ENCODE measurements at regions of chr2 and their contacts with region 1.

Region 1: GRCh38 chr2:73828818-73829570 is at the start of gene STAMBP:
- ATAC-seq: peak; percentile 91 to 99 (median 98)
- H3K4me3 ChIP-seq: peak within 1 kb of the TSS; percentile 66 to 94 (median 83)
- H3K27ac ChIP-seq: peak within 1 kb of the TSS; percentile 86 to 87
- H3K4me1 ChIP-seq: peaks cover 5 to 8% of the 10 kb centered on the region in 2 donors
- total RNA-seq, gene STAMBP: 28.3 to 65.1 (median 37.3) TPM

Region 2: GRCh38 chr2:73970850-73971471 is 142.0 kb after region 1 on chr2:
- in situ Hi-C with region 1: loop called in 1 of 9 experiments (anchors 25 kb)
- ATAC-seq: no peak
- H3K4me3 ChIP-seq: no peak overlapping the region
- H3K27ac ChIP-seq: no peak overlapping the region
- H3K4me1 ChIP-seq: peaks cover 0 to 7% of the 10 kb centered on the region in 2 donors

Region 3: DNA sequence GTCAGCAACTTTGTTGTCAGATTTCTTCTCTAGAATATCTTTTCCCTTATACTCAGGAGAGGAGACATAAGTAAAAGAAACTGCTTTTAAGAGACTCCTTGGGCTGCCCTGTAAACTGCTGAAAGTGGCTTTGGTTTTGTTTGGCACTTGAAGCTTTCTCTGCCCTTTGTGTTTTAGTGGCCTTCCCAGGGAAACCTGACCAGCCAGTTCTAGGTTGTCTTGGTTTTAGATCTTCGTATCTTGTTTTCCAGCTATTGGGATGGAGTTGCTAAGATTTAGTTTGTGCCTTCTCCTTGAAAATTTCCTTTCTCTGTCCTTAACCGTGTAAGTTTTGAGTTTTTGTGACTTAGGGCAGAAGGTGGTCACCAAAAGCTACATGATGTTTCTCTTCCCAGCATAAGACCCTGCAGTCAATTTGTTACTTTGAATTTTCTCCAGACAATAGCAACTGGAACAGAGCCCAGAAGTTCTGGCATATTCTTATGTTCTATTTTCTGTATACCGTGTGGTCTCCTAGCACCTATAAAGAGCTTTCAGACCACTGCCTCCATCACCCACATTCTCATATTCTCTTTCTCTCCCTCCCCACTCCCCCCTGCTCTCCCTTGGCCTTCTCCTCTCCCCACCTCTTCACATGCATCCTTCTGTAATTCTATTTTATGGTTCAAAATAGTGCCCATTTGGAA is 237.7 kb after region 1 on chr2:
- in situ Hi-C with region 1: no loop called
- ATAC-seq: peak in 1 of 8 experiments; percentile 67
- H3K4me3 ChIP-seq: no peak overlapping the region
- H3K27ac ChIP-seq: no peak overlapping the region
- H3K4me1 ChIP-seq: no peaks in the 10 kb centered on the region

Region 4: DNA sequence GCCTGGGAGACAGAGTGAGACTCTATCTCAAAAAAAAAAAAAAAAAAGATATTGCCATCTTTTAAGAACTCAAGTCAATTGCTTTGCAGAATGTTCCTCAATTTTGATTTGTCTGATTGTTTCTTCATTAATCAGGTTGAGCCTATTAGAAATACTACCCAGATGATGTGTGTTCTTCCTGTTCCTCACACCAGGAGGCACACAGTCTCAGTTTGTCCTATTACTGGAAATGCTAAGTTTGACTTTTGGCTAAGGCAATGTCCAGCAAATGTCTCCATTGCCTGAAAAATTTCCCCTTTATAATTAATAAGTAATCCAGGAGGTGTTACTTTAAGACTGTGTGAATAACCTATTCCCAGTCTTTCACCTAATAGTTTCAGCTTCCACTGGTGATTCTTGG is 290.3 kb after region 1 on chr2:
- in situ Hi-C with region 1: no loop called
- ATAC-seq: no peak
- H3K4me3 ChIP-seq: no peak overlapping the region
- H3K27ac ChIP-seq: no peak overlapping the region
- H3K4me1 ChIP-seq: no peaks in the 10 kb centered on the region

Region 5: GRCh38 chr2:74147727-74148456 is 318.9 kb after region 1 on chr2 and contains the start of gene BOLA3:
- in situ Hi-C with region 1: loop called in 6 of 9 experiments (anchors 25 kb)
- ATAC-seq: peak; percentile 90 to 98 (median 96)
- H3K4me3 ChIP-seq: peak within 1 kb of the TSS; percentile 64 to 97 (median 92)
- H3K27ac ChIP-seq: peak within 1 kb of the TSS; percentile 31 to 56
- H3K4me1 ChIP-seq: peaks cover 13 to 14% of the 10 kb centered on the region in 2 donors
- total RNA-seq, gene BOLA3: 31.2 to 77.9 (median 45.8) TPM

Region 6: GRCh38 chr2:74168739-74169138 is 339.7 kb after region 1 on chr2:
- in situ Hi-C with region 1: loop called in 5 of 9 experiments (anchors 25 kb)
- ATAC-seq: no peak
- H3K4me3 ChIP-seq: no peak overlapping the region
- H3K27ac ChIP-seq: no peak overlapping the region
- H3K4me1 ChIP-seq: no peaks in the 10 kb centered on the region